MCF 10A (cell line): ENCODE measurements at regions of chr5 and their contacts with region 1.

Region 1: GRCh38 chr5:168404365-168404764 is 81.9 kb upstream of the RARS1 start:
- DNase-seq: peak; percentile 81
- H3K4me3 Mint-ChIP-seq: peak overlapping the region; percentile 6
- H3K27ac Mint-ChIP-seq: peak overlapping the region; percentile 24
- H3K4me1 Mint-ChIP-seq: peaks cover 29% of the 10 kb centered on the region
- H3K27me3 Mint-ChIP-seq: no peaks in the 10 kb centered on the region
- CTCF ChIP-seq: no peak

Region 2: GRCh38 chr5:168390491-168390890 is 13.9 kb before region 1 on chr5:
- CTCF ChIA-PET with region 1: interaction called, 11 read pairs
- POLR2A ChIA-PET with region 1: interaction called, 8 read pairs
- intact Hi-C with region 1: no loop called
- DNase-seq: peak; percentile 28
- H3K4me3 Mint-ChIP-seq: no peak overlapping the region
- H3K27ac Mint-ChIP-seq: peak overlapping the region; percentile 66
- H3K4me1 Mint-ChIP-seq: peaks cover 7% of the 10 kb centered on the region
- H3K27me3 Mint-ChIP-seq: no peaks in the 10 kb centered on the region
- CTCF ChIP-seq: no peak

Region 3: DNA sequence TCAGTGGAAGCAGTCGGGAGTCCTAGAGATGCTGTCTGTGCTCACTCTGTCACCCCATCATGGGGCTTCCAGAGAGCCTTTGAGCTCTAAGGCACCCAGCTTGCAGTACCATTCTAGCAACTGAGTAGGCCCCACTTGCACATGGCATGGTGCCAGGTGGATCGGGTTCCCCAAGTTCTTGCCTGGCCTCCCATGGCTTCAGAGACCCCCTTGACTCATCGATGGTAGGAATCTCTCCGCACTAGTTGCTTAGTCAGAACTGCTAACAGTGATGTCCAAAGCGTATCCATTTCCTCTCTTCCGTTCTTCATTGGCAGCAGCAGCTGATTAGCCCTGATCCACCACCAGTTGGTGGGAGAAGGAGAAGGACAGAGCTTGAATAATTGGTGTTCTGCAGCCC is 11.6 kb after region 1 on chr5:
- CTCF ChIA-PET with region 1: interaction called, 47 read pairs
- POLR2A ChIA-PET with region 1: interaction called, 3 read pairs
- intact Hi-C with region 1: no loop called
- DNase-seq: no peak
- H3K4me3 Mint-ChIP-seq: no peak overlapping the region
- H3K27ac Mint-ChIP-seq: no peak overlapping the region
- H3K4me1 Mint-ChIP-seq: peaks cover 21% of the 10 kb centered on the region
- H3K27me3 Mint-ChIP-seq: no peaks in the 10 kb centered on the region
- CTCF ChIP-seq: no peak